Activated naive CD4-positive, alpha-beta T cell treated with anti-CD3 and anti-CD28 coated beads for 36 hours (primary cell): ENCODE measurements at regions of chr13 and their contacts with region 1.

Region 1: GRCh38 chr13:113208424-113209335 is at the start of gene PCID2:
- DNase-seq: peak; percentile 89
- H3K4me3 Mint-ChIP-seq: peak within 1 kb of the TSS; percentile 77
- H3K27ac Mint-ChIP-seq: peak within 1 kb of the TSS; percentile 81
- H3K4me1 Mint-ChIP-seq: peaks cover 55% of the 10 kb centered on the region
- H3K27me3 Mint-ChIP-seq: no peaks in the 10 kb centered on the region
- total RNA-seq, gene PCID2: 63.5 to 67.1 TPM

Region 2: GRCh38 chr13:112689303-112690165 is 519.1 kb before region 1 on chr13 and contains the start of gene ATP11A:
- CTCF ChIA-PET with region 1: no interaction called
- intact Hi-C with region 1: loop called (anchors 5 kb)
- DNase-seq: peak; percentile 77
- H3K4me3 Mint-ChIP-seq: peak within 1 kb of the TSS; percentile 78
- H3K27ac Mint-ChIP-seq: peak within 1 kb of the TSS; percentile 80
- H3K4me1 Mint-ChIP-seq: peaks cover 45% of the 10 kb centered on the region
- H3K27me3 Mint-ChIP-seq: no peaks in the 10 kb centered on the region
- total RNA-seq, gene ATP11A: 24.7 to 25.6 TPM

Region 3: GRCh38 chr13:112968908-112969691 is 239.6 kb before region 1 on chr13 and contains the start of gene MCF2L:
- CTCF ChIA-PET with region 1: no interaction called
- intact Hi-C with region 1: loop called (anchors 1 kb)
- DNase-seq: peak; percentile 76
- H3K4me3 Mint-ChIP-seq: peak within 1 kb of the TSS; percentile 91
- H3K27ac Mint-ChIP-seq: peak within 1 kb of the TSS; percentile 74
- H3K4me1 Mint-ChIP-seq: peaks cover 25% of the 10 kb centered on the region
- H3K27me3 Mint-ChIP-seq: no peaks in the 10 kb centered on the region
- total RNA-seq, gene MCF2L: 6.5 to 7.4 TPM

Region 4: DNA sequence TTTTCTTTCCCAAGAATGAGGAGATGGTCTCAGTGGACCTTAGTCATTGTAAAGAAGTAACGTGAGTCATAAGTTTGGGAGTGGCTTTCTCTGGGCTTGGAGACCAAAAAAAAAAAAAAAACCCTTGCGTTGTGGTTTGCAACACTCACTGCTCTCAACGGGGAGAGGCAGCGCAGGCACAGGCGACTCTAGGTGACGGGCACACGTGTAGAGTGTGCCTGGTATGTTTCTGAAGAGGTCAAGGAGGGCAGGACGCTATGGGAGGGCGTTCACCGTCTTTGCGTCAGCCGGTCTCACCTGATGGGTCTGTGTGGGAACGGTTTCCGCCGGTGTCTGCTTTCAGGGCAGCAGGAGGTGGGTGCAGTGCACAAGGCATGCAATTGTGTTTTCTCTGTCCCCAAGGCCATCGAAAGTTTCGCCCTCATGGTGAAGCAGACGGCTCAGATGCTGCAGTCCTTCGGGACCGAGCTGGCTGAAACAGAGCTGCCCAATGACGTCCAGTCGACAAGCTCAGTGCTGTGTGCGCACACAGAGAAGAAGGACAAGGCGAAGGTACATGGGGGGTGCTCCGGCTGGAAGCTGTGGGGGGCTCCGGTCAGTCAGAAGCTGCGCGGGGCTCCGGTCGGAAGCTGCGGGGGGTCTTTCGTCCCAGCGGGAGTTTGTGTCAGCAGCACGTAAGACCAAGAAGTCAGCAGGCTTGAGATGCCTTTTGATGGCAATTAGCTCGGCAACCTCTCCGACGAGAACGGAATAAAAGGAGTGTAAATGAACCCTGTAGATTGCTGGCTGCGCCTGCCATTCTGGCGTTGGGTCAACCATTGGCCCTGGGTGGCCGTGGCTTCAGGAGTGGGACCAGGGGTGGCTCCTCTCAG is 143.9 kb before region 1 on chr13:
- CTCF ChIA-PET with region 1: no interaction called
- intact Hi-C with region 1: no loop called
- DNase-seq: no peak
- H3K4me3 Mint-ChIP-seq: no peak overlapping the region
- H3K27ac Mint-ChIP-seq: no peak overlapping the region
- H3K4me1 Mint-ChIP-seq: no peaks in the 10 kb centered on the region
- H3K27me3 Mint-ChIP-seq: no peaks in the 10 kb centered on the region

Region 5: GRCh38 chr13:113187263-113187669 is 21.4 kb before region 1 on chr13:
- CTCF ChIA-PET with region 1: no interaction called
- intact Hi-C with region 1: loop called (anchors 1 kb)
- DNase-seq: peak; percentile 75
- H3K4me3 Mint-ChIP-seq: no peak overlapping the region
- H3K27ac Mint-ChIP-seq: peak overlapping the region; percentile 11
- H3K4me1 Mint-ChIP-seq: peaks cover 31% of the 10 kb centered on the region
- H3K27me3 Mint-ChIP-seq: no peaks in the 10 kb centered on the region

Region 6: DNA sequence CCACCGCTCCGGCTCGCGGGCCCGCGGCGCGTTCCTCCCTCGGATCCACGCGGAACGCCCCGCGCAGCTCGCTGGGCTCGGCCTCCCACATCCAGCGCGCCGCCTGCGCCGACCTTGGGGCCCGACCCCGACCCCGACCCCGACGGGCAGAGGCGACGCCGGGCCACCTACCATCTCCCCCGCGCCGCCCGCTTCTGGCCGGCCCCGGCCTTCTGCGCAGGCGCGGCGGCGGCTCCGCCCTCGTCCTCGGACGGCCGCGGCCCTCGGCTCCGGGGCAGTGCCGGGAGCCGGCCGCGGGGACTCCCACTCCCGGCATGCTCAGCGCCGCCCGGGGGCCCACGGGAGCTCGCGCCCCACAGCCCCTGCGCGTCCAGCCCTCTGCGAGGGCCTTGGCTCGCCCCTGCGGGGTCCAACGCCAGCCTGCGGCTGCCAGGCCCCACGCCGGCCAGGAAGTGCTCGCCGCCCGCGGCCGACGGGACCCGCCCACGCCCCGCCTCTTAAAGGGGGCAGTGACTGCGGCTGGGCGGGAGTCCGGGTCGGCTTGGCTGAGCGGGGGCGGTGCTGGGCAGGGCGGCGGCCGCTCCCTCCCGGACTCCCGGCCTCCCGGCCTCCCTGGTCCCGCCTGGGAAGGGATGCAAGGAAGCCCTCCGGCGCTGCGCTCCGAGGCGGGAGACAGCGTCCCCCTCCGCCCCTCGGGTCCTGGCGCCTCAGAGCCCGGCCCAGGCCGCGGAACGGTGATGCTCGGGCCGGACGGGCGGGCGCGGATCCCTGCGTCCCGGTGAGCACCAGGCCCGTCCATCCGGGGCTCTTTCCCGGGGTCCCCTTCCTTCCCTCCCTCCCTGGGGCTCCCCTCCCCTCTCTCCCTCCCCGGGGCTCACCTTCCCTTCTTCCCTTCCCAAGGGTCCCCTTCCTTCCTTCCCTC is 282.1 kb after region 1 on chr13 and contains the start of gene DCUN1D2:
- CTCF ChIA-PET with region 1: no interaction called
- intact Hi-C with region 1: loop called (anchors 1 kb)
- DNase-seq: peak; percentile 70
- H3K4me3 Mint-ChIP-seq: peak within 1 kb of the TSS; percentile 96
- H3K27ac Mint-ChIP-seq: peak within 1 kb of the TSS; percentile 85
- H3K4me1 Mint-ChIP-seq: peaks cover 64% of the 10 kb centered on the region
- H3K27me3 Mint-ChIP-seq: no peaks in the 10 kb centered on the region
- total RNA-seq, gene DCUN1D2: 14.3 to 14.7 TPM

Region 7: DNA sequence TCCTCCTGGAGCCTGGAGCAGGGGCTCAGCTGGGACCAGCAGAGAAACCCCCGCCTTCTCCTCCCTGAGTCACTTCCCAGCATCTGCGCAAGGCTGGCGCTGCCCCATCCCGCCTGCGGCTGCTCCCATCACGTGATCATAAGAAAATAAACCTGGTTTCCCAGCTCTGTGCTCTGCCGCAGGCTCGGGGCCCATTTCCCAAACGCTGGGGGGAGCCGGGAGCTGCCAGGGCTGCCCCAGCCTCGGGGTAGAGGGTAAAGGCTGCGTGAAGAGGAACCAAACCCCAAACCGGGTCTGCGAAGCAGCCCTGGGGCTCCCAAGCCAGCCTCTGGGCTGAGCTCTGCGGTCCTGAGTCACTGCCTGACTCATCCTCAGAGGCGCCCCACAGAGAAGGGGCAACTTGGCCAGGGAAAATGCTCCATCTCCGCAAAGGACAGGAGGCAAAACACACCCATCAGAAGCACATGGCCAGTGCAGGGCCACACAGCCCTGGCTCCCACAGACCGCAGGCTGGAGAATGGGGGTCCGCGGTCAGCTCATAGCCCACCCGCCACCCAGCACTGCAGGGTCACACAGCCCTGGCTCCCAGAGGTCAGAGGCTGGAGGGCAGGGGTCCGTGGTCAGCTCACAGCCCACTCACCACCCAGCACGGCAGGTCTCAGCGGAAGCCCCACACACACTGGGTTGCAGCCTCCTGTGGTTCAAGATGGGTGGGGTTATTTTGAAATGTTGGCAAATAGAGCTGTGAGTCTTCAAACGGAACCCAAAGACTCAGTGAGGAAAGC is 856.7 kb after region 1 on chr13:
- CTCF ChIA-PET with region 1: no interaction called
- intact Hi-C with region 1: loop called (anchors 10 kb)
- DNase-seq: peak; percentile 90
- H3K4me3 Mint-ChIP-seq: peak overlapping the region; percentile 67
- H3K27ac Mint-ChIP-seq: peak overlapping the region; percentile 95
- H3K4me1 Mint-ChIP-seq: peaks cover 67% of the 10 kb centered on the region
- H3K27me3 Mint-ChIP-seq: no peaks in the 10 kb centered on the region